ENCODE measurements at regions of chr4 and their contacts with region 1.

Region 1: DNA sequence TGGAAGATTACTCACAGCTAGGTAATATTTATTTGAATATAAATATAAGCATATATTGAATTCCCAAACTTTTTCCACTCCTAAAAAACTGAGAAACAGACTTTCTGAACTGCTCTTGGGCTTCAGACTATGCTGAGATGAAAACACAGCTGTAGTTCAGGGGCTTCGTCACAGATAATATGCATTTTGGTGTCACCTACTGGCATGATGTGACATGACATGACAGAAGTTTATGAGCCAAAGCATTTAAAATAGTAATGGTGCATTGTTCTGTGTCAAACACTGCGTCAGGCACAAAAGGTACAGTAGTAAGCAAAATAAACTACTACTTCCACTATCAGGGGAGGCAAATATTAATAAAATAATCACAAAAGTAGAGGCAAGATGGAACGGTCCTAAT is 171.3 kb downstream of the BTC start:
- DNase-seq: no peak
- H3K4me3 Mint-ChIP-seq: no peak overlapping the region
- H3K27ac Mint-ChIP-seq: no peak overlapping the region
- H3K4me1 Mint-ChIP-seq: peaks cover 13% of the 10 kb centered on the region
- H3K27me3 Mint-ChIP-seq: no peaks in the 10 kb centered on the region

Region 2: GRCh38 chr4:74376888-74377483 is 246.1 kb before region 1 on chr4:
- CTCF ChIA-PET with region 1: interaction called, 24 read pairs
- DNase-seq: no peak
- H3K4me3 Mint-ChIP-seq: no peak overlapping the region
- H3K27ac Mint-ChIP-seq: no peak overlapping the region
- H3K4me1 Mint-ChIP-seq: no peaks in the 10 kb centered on the region
- H3K27me3 Mint-ChIP-seq: no peaks in the 10 kb centered on the region